Dorsolateral prefrontal cortex (tissue), 120 donors: ENCODE measurements at regions of chr2 and their contacts with region 1.

Region 1: DNA sequence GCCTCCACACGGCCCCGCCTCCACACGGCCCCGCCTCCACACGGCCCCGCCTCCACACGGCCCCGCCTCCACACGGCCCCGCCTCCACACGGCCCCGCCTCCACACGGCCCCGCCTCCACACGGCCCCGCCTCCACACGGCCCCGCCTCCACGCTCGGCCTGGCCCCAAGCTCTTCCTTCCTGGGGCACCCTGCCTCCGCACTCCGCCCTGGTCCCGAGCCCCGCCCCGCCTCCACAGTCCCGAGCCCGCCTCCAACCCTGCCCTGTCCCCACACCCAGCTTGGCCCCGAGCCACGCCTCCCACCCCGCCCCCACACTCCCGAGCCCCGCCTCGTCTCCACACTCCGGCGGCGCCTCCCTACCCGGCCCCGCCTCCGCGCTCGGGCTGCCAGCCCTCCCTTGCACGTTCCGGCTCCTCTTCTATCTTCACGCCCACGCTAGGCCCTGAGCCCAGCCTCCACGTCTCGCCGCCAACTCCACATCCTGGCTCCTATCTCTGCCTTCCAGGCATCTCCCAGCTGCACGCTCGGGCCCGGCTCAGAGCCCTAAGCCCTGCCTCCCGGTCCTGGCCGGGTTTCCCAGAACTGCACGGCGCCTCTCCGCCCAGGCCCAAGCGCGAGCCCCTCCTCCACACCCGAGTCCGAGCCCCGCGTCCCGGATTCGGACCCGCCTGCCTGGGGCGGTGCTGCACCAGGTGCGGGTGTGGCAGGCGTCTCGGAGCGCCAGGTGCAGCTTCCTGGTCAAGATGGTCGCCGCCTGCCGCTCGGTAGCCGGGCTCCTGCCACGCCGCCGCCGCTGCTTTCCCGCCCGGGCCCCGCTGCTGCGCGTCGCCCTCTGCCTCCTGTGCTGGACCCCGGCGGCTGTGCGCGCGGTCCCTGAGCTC is at the start of gene TMEM87B:
- DNase-seq: peak; percentile 90 to 97 (median 95)
- H3K4me3 ChIP-seq: peak within 1 kb of the TSS; percentile 62 to 98 (median 89)
- H3K27ac ChIP-seq: peak within 1 kb of the TSS; percentile 56 to 97 (median 93)
- H3K27me3 ChIP-seq: no peaks in the 10 kb centered on the region
- CTCF ChIP-seq: peak in 7 of 56 donors; percentile 6 to 24 (median 11)
- total RNA-seq, gene TMEM87B: 7.2 to 27.9 (median 14.7) TPM

Region 2: DNA sequence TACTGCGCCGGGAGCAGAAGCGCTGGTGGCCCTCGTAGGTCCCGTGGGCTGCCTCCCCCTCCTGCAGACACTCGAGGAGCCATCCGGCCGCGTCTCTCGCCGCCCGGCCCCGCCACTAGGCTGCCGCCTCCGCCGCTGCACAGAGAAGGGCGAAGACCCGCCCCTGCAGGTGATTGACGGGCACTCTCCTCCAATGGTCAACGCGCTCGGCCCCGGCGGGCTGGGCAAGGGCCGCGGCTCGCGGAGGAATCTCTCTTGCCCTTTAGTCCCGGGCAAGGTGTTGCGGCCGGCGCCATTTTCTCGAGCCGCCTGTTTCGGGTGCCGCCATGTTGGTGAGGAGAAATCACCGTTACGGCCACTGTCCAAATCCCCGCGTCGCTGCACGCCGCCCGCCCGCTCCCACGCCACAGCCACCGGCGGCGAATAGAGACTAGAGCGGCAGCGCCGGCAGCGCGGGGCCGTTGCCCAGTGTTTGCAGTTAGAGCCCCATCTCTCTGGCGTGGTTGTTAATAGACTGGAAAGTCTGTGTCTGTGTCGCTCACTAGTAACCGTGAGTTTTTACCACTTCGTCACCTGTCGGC is 220.3 kb after region 1 on chr2 and contains the start of gene ZC3H6:
- intact Hi-C with region 1: loop called in 1 of 2 experiments (anchors 5 kb)
- DNase-seq: peak; percentile 97 to 100 (median 99)
- H3K4me3 ChIP-seq: peak within 1 kb of the TSS; percentile 68 to 99 (median 90)
- H3K27ac ChIP-seq: peak within 1 kb of the TSS; percentile 98 to 100 (median 100)
- H3K27me3 ChIP-seq: no peaks in the 10 kb centered on the region
- CTCF ChIP-seq: peak in 49 of 56 donors; percentile 9 to 68 (median 42)
- total RNA-seq, gene ZC3H6: 20.4 to 50.4 (median 36.4) TPM

Region 3: DNA sequence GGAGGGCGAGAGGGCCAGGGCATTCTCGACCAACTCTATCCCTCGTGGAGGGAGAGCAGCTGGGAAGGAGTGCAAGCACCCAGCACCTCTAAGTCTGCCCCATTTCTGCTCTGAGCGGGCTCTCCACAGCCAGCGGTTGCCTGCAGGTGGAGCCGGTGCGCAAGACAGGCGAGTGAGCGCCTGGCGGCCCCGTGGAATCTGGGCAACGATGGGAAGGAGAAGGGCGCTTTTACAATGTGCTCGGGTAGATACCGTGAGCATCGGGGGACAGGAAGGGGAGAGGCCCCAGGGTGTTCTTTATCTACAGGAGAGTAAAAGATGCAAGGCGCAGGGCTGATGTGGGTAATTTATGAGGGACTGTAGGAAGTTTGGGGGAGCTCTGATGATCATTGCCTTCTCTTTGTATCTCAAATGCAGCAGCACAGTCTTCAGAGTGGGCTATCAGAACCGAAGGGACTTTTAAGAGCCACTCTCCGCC is 426.0 kb after region 1 on chr2:
- intact Hi-C with region 1: loop called (anchors 5 to 10 kb)
- DNase-seq: peak; percentile 77 to 92 (median 86)
- H3K4me3 ChIP-seq: peak overlapping the region; percentile 57 to 97 (median 83)
- H3K27ac ChIP-seq: peak overlapping the region; percentile 74 to 97 (median 91)
- H3K27me3 ChIP-seq: no peaks in the 10 kb centered on the region
- CTCF ChIP-seq: peak; percentile 51 to 95 (median 83)

Region 4: GRCh38 chr2:112645310-112646101 is 590.4 kb after region 1 on chr2 and contains the start of gene SLC20A1:
- intact Hi-C with region 1: loop called in 1 of 2 experiments (anchors 10 kb)
- DNase-seq: peak; percentile 93 to 100 (median 97)
- H3K4me3 ChIP-seq: peak within 1 kb of the TSS; percentile 71 to 99 (median 93)
- H3K27ac ChIP-seq: peak within 1 kb of the TSS; percentile 86 to 99 (median 97)
- H3K27me3 ChIP-seq: no peaks in the 10 kb centered on the region
- CTCF ChIP-seq: peak in 50 of 56 donors; percentile 16 to 63 (median 43)
- total RNA-seq, gene SLC20A1: 41.1 to 97.4 (median 66.6) TPM

Region 5: DNA sequence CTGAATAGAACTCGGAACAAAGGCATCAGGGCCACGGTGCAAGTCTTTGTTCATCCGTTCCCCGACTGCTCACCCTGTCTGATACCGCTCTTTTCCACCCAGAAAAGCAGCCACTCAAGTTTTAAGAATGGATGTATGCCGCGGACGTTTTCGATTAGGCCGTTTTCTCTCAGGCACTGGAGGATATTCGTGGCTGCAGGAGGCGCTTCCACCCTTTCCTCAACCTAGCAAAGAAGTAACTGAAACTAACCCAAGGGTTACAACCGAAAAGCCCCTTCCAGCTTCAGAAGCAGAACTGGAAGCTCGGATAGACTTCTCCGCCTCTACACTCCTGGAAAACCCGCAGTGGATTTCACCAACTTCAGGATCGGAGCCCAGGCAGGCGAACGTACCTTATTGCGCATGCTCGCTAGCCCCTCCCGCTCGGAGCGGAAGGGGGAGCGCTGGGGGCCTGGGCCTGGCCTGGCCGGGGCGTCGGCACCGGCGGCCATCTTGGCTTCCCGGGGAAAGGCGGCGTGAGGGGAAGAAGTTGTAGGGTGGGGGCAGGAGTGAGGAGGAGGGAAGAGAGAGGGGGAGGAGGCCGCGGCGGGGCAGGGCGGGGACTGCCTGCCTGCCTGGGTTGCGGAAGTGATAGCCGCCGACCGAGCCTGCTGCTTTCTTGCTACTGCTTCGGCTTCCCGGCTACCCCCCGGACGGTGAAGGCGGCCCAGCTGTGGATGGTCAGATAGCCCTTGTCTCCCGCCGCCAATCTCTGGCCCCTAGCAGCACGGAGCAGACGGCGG is 1834.6 kb after region 1 on chr2 and contains the start of gene ACTR3:
- intact Hi-C with region 1: loop called in 1 of 2 experiments (anchors 10 kb)
- DNase-seq: peak; percentile 89 to 97 (median 94)
- H3K4me3 ChIP-seq: peak within 1 kb of the TSS; percentile 69 to 99 (median 89)
- H3K27ac ChIP-seq: peak within 1 kb of the TSS; percentile 74 to 98 (median 94)
- H3K27me3 ChIP-seq: no peaks in the 10 kb centered on the region
- CTCF ChIP-seq: peak in 24 of 56 donors; percentile 3 to 43 (median 27)
- total RNA-seq, gene ACTR3: 89.6 to 176 (median 126) TPM